ENCODE measurements at regions of chr4 and their contacts with region 1.

Region 1: DNA sequence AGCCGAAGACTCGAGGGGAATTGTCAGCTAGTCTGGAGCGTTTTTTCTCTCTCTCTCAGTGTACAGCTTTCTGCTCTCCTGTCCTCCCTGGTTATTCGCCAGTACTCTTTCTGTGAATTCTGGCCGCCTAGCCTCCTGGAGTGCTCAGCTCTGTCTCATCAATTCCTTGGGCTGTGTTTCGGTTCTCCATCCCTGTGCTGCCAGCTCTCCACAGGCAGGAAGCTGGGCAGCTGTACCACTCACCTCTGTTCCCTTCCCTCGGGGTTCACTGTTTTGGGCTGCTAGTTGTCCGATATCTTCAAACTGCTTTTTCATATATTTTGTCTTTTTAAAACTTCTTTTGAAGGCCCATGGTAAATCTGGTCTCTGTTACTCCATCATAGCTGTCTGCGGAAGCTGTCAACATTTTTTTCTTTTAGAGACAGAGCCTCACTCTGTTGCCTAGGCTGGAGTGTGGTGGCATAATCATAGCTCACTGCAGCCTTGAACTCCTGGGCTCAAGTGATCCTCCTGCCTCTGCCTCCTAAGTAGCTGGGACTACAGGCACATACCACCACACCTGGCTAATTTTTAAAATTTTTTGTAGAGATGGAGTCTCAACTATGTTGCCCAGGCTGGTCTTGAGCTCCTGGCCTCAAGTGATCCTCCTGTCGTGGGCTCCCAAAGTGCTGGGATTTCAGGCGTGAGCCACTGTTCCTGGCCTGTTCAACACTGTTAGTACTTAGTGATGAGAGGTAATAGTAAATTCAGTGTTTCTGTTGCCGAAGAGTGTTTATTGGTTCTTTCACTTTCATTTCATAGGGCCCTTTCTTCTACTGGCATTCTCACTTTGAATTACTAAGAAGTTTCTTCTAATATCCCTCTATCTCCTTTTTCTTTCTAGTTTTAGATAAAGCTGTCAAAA is 18.6 kb downstream of the ZCCHC4 start:
- DNase-seq: no peak
- ATAC-seq: peak; percentile 91
- H3K4me3 ChIP-seq: peak overlapping the region; percentile 63
- H3K27ac ChIP-seq: peak overlapping the region; percentile 68
- H3K4me1 ChIP-seq: peaks cover 4% of the 10 kb centered on the region
- H3K27me3 ChIP-seq: no peaks in the 10 kb centered on the region
- CTCF ChIP-seq: no peak
- EP300 ChIP-seq: no peak
- POLR2A ChIP-seq: no peak
- RAD21 ChIP-seq: no peak

Region 2: GRCh38 chr4:25223802-25224375 is 107.3 kb before region 1 on chr4:
- CTCF ChIA-PET with region 1: no interaction called
- POLR2A ChIA-PET with region 1: no interaction called
- RAD21 ChIA-PET with region 1: no interaction called
- SMC1A ChIA-PET with region 1: no interaction called
- in situ Hi-C with region 1: no loop called
- intact Hi-C with region 1: no loop called
- DNase-seq: no peak
- ATAC-seq: no peak
- H3K4me3 ChIP-seq: no peak overlapping the region
- H3K27ac ChIP-seq: no peak overlapping the region
- H3K4me1 ChIP-seq: no peaks in the 10 kb centered on the region
- H3K27me3 ChIP-seq: no peaks in the 10 kb centered on the region
- CTCF ChIP-seq: no peak
- EP300 ChIP-seq: no peak
- POLR2A ChIP-seq: no peak
- RAD21 ChIP-seq: no peak

Region 3: GRCh38 chr4:25320773-25321172 is 10.4 kb before region 1 on chr4:
- CTCF ChIA-PET with region 1: interaction called, 7 read pairs
- POLR2A ChIA-PET with region 1: interaction called, 4 read pairs
- RAD21 ChIA-PET with region 1: interaction called, 5 read pairs
- SMC1A ChIA-PET with region 1: interaction called, 10 read pairs
- in situ Hi-C with region 1: no loop called
- intact Hi-C with region 1: no loop called
- DNase-seq: no peak
- ATAC-seq: peak; percentile 53
- H3K4me3 ChIP-seq: no peak overlapping the region
- H3K27ac ChIP-seq: peak overlapping the region; percentile 31
- H3K4me1 ChIP-seq: peaks cover 12% of the 10 kb centered on the region; the same call in 1 of the 2 replicates
- H3K27me3 ChIP-seq: no peaks in the 10 kb centered on the region
- CTCF ChIP-seq: no peak
- EP300 ChIP-seq: no peak
- POLR2A ChIP-seq: no peak
- RAD21 ChIP-seq: no peak

Measured in GM12878 (cell line).